ENCODE measurements at regions of chr7 and their contacts with region 1.

Region 1: DNA sequence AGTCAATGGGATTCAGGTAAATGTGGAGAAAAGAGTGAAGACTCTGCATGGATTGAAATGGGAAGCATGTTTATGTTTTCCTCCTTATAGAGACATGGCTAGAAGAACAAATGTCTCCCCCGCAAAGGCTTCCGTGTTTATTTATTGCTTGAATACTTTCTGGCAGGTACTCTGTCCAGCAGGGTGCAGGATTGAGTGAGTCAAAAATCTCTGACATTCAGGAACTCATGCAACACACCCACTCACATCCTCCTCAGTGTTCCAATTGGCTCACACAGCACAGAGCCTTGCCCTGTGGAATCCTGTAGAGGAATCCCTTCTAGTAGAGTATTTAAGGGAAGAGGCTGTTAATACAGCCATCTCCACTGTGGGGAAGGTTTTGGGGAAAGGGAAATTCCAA is 290.3 kb upstream of the VWC2 start:
- DNase-seq: no peak
- ATAC-seq: peak; percentile 85

Region 2: DNA sequence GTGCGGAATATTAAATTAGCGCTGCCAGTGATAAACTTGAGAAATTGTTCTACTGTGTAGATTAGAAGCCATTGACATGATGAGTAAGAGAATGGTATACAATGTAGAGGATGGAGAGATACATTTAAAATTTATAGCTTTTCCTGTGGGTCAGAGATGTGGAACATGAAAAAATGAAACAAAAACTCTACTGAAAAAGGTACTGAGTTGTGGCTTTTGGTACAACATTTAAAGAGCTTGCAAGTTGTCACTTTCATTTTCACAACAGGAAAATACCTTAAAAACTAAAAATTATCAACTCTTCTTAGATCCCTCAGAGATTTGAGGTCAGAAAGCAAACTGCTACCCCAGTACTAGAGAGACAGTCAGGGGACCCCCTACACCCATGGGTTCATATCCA is 907.6 kb before region 1 on chr7:
- intact Hi-C with region 1: no loop called
- DNase-seq: no peak
- ATAC-seq: no peak

Region 3: GRCh38 chr7:49099587-49100326 is 383.4 kb before region 1 on chr7:
- intact Hi-C with region 1: no loop called
- DNase-seq: no peak
- ATAC-seq: no peak

Region 4: DNA sequence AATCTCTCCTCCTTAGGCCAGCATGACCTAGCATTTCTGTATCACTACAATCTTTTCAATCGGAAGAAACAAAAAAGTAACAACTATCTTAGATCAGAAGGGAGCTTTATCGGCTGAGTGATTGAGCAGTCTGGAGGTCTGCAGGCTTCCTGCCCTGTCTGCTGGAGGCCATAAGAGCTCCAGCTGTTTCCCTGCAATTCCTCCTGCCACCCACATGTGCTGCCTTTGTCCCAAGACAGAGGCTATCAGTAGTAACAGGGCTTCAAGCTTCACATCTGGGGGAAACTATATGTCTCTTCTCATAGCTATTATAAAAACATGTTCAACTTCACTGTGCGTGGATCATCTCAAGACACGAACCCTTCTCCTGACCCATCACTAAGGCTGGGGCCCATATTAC is 220.2 kb after region 1 on chr7:
- intact Hi-C with region 1: no loop called
- DNase-seq: no peak
- ATAC-seq: no peak

Region 5: GRCh38 chr7:49791088-49791741 is 308.1 kb after region 1 on chr7:
- intact Hi-C with region 1: loop called (anchors 5 kb)
- DNase-seq: no peak
- ATAC-seq: peak; percentile 84

Region 6: DNA sequence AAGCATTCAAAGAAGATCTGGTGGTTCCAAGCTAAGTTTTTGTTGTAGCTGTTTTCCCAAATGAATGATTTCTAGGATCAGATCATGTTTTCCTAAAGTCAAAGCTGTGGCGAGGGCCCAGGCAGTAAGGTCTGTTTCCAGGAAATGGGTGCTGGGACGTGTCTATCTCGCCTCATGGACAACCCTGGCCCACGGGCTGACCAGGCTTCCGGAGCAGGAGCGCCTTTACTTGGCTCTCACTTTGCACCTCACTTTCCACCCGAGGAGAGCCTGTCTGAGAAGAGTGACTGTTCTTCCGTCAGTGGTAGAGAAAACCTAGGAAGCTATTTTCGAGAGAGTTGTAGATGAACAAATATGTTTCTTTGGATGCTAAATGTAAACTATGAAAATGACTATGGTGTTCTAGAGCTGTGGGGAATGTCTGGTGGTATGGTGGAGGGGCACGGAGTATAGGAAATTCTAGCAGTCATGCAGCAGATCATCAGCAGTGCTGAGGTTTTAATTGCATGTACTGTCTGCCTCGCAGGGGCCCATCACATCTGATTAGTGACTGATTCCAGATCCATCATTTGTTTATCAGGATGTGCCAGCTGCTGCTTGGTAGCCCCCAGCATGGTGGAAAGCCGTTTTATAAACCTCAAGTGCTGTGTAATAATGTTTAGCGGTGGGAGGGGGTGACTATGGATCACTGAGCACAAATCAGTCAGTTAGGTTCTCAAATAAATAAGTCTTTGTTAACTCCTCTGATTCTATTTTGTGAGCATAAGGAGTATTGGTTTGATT is 356.9 kb after region 1 on chr7:
- intact Hi-C with region 1: no loop called
- DNase-seq: no peak
- ATAC-seq: peak; percentile 34

Measured in Right ventricle myocardium superior (tissue), 1 donor.